HEK293 (cell line): ENCODE measurements at regions of chr6 and their contacts with region 1.

Region 1: GRCh38 chr6:16332175-16332542 is 93.8 kb downstream of the GMPR start:
- H3K4me3 ChIP-seq: no peak overlapping the region
- H3K27ac ChIP-seq: no peak overlapping the region
- H3K4me1 ChIP-seq: no peaks in the 10 kb centered on the region
- CTCF ChIP-seq: peak; percentile 76

Region 2: GRCh38 chr6:16319813-16320532 is 12.2 kb before region 1 on chr6:
- CTCF ChIA-PET with region 1: interaction called, 86 read pairs
- POLR2A ChIA-PET with region 1: no interaction called
- H3K4me3 ChIP-seq: peak overlapping the region; percentile 17
- H3K27ac ChIP-seq: peak overlapping the region; percentile 59
- H3K4me1 ChIP-seq: peaks cover 11% of the 10 kb centered on the region
- CTCF ChIP-seq: no peak

Region 3: DNA sequence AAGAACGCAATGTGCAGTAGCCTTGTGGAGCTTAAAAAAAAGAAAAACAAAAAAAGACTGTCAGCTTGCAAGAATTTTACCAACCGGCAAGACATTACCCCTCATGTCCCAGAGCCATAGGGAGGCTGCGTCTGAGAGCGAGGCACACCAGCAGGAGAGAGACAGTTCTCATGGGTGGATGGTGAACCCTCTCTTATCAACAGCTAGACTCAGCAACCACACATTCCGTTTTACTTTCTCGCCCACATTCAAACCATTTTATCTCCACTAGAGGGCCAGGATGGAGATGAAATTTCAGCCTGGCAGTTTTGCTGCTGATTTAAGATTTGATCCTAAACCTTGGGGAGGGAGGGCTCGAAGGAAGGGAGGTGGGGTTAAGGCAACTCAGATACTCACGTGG is 182.1 kb after region 1 on chr6:
- CTCF ChIA-PET with region 1: interaction called, 14 read pairs
- POLR2A ChIA-PET with region 1: no interaction called
- H3K4me3 ChIP-seq: no peak overlapping the region
- H3K27ac ChIP-seq: no peak overlapping the region
- H3K4me1 ChIP-seq: peaks cover 19% of the 10 kb centered on the region
- CTCF ChIP-seq: peak; percentile 29; the same call in 1 of the 2 replicates

Region 4: DNA sequence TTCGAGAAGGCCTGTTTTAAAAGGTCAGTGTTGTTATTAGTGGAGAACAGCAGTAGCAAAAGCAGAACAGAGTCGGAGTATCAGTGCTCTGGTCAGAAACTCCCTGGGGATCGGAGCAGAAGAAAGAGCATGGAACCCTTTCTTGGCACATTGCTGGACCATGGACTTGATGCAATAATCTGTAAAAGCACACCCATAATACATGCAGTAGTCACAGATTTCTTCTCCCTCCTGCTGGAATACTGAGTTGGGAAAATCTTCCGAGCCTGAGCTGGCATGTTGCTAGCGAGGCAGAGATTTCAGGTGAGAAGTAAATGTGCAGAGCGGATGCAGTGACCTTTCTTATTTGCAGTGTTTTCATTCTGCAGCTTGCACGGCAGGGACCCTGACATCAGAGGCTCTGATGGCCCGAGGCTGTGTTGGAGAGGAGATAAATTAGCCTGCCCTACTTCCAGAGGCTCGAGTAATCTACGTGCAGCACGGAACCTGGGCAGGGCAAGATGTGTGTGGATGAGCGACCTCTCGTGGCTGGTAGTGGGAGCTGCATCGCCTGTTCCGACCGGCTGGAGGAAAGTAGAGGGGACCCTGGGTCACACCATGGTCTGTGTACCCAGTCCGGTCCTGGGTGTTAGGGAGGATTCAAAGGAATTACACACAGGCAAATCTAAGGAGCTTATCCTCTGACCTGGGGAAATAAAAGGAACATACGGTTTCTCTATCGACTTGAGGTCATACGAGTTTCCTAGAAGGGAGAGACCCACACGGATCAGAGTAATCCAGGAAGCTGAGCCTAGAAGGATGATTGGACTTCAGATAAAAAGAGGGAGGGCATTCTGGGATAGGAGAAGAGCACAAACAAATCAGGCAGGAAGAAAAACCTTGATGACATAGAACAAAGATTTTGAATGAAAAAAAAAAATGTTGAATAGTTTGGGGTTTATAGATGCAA is 632.7 kb after region 1 on chr6:
- CTCF ChIA-PET with region 1: interaction called, 10 read pairs
- POLR2A ChIA-PET with region 1: no interaction called
- H3K4me3 ChIP-seq: no peak overlapping the region
- H3K27ac ChIP-seq: no peak overlapping the region
- H3K4me1 ChIP-seq: no peaks in the 10 kb centered on the region
- CTCF ChIP-seq: peak; percentile 93

Region 5: GRCh38 chr6:17086469-17086868 is 754.3 kb after region 1 on chr6:
- CTCF ChIA-PET with region 1: interaction called, 12 read pairs
- POLR2A ChIA-PET with region 1: no interaction called
- H3K4me3 ChIP-seq: no peak overlapping the region
- H3K27ac ChIP-seq: no peak overlapping the region
- H3K4me1 ChIP-seq: no peaks in the 10 kb centered on the region; the same call in 1 of the 2 replicates
- CTCF ChIP-seq: peak; percentile 55; the same call in 1 of the 2 replicates